Caco-2 (cell line): ENCODE measurements at regions of chr7 and their contacts with region 1.

Region 1: GRCh38 chr7:106285051-106285854 is 470 bp upstream of the NAMPT start:
- DNase-seq: peak; percentile 99
- H3K4me3 ChIP-seq: peak overlapping the region; percentile 67
- H3K4me3 Mint-ChIP-seq: peak overlapping the region; percentile 93
- H3K27ac Mint-ChIP-seq: peak overlapping the region; percentile 93
- H3K4me1 ChIP-seq: peaks cover 7% of the 10 kb centered on the region; the same call in 1 of the 2 replicates
- H3K4me1 Mint-ChIP-seq: peaks cover 13% of the 10 kb centered on the region
- H3K27me3 ChIP-seq: no peaks in the 10 kb centered on the region
- H3K27me3 Mint-ChIP-seq: no peaks in the 10 kb centered on the region
- CTCF ChIP-seq: no peak

Region 2: GRCh38 chr7:106031300-106032035 is 253.8 kb before region 1 on chr7:
- CTCF ChIA-PET with region 1: no interaction called
- POLR2A ChIA-PET with region 1: no interaction called
- intact Hi-C with region 1: no loop called
- DNase-seq: no peak
- H3K4me3 ChIP-seq: no peak overlapping the region
- H3K4me3 Mint-ChIP-seq: no peak overlapping the region
- H3K27ac Mint-ChIP-seq: no peak overlapping the region
- H3K4me1 ChIP-seq: no peaks in the 10 kb centered on the region
- H3K4me1 Mint-ChIP-seq: no peaks in the 10 kb centered on the region
- H3K27me3 ChIP-seq: no peaks in the 10 kb centered on the region
- H3K27me3 Mint-ChIP-seq: peaks cover 4% of the 10 kb centered on the region
- CTCF ChIP-seq: no peak

Region 3: GRCh38 chr7:106112117-106112971 is 172.9 kb before region 1 on chr7 and contains the start of gene SYPL1:
- CTCF ChIA-PET with region 1: no interaction called
- POLR2A ChIA-PET with region 1: interaction called, 16 read pairs
- intact Hi-C with region 1: loop called (anchors 5 kb)
- DNase-seq: peak; percentile 96
- H3K4me3 ChIP-seq: peak within 1 kb of the TSS; percentile 59
- H3K4me3 Mint-ChIP-seq: peak within 1 kb of the TSS; percentile 90
- H3K27ac Mint-ChIP-seq: peak within 1 kb of the TSS; percentile 88
- H3K4me1 ChIP-seq: peaks cover 25% of the 10 kb centered on the region
- H3K4me1 Mint-ChIP-seq: peaks cover 18% of the 10 kb centered on the region
- H3K27me3 ChIP-seq: no peaks in the 10 kb centered on the region
- H3K27me3 Mint-ChIP-seq: no peaks in the 10 kb centered on the region
- CTCF ChIP-seq: peak in 1 of 2 experiments; percentile 19
- total RNA-seq, gene SYPL1: 78.7 and 81.0 TPM in 2 replicates

Region 4: GRCh38 chr7:106239404-106239803 is 45.8 kb before region 1 on chr7:
- CTCF ChIA-PET with region 1: no interaction called
- POLR2A ChIA-PET with region 1: no interaction called
- intact Hi-C with region 1: no loop called
- DNase-seq: no peak
- H3K4me3 ChIP-seq: no peak overlapping the region
- H3K4me3 Mint-ChIP-seq: no peak overlapping the region
- H3K27ac Mint-ChIP-seq: no peak overlapping the region
- H3K4me1 ChIP-seq: no peaks in the 10 kb centered on the region
- H3K4me1 Mint-ChIP-seq: peaks cover 8% of the 10 kb centered on the region
- H3K27me3 ChIP-seq: no peaks in the 10 kb centered on the region
- H3K27me3 Mint-ChIP-seq: no peaks in the 10 kb centered on the region
- CTCF ChIP-seq: no peak

Region 5: GRCh38 chr7:106367018-106367420 is 81.8 kb after region 1 on chr7:
- CTCF ChIA-PET with region 1: no interaction called
- POLR2A ChIA-PET with region 1: interaction called, 3 read pairs
- intact Hi-C with region 1: loop called (anchors 5 kb)
- DNase-seq: no peak
- H3K4me3 ChIP-seq: no peak overlapping the region
- H3K4me3 Mint-ChIP-seq: no peak overlapping the region
- H3K27ac Mint-ChIP-seq: no peak overlapping the region
- H3K4me1 ChIP-seq: peaks cover 9% of the 10 kb centered on the region
- H3K4me1 Mint-ChIP-seq: no peaks in the 10 kb centered on the region
- H3K27me3 ChIP-seq: no peaks in the 10 kb centered on the region
- H3K27me3 Mint-ChIP-seq: no peaks in the 10 kb centered on the region
- CTCF ChIP-seq: no peak

Region 6: DNA sequence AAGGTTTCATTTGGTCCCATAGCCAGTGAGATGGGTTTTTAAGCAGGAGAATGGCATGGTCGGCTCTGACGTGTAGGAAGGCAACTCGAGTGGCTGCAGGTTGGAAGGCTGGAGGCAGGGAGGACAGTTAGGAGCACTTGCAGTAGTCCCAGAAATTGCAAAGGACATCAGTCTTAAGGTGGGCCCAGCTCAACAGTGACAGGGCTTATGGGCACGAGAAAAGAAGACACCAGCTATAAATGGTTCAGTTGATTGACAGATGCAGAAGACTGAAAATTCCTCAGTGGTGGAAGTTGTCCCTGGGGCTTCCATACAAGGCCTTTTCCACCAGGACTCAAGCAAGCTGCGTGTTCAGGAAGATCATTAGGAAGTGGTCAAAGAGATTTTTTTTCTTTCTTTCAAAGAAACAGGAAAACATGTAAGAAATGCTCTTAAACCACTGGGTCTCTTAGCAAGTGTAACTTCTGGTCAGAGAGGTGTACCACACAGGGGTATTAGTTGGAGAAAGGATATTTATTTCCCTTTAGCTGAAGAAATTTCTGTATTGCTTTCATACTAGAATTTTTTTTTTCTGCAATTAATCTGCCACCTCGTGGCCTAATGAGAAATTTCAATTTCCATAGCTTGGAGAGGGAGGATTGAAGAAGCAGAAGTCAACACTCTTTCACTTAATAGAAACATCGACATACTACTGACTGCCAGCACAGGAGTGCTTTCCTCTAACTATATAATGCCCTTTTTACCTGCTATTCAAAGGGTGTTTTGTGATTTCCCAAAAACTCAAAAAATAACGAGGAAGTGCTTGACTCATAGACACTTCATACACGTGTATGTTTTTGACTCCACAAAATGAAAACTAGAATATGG is 177.0 kb after region 1 on chr7:
- CTCF ChIA-PET with region 1: interaction called, 24 read pairs
- POLR2A ChIA-PET with region 1: interaction called, 21 read pairs
- intact Hi-C with region 1: loop called (anchors 1 kb)
- DNase-seq: peak in 1 of 2 experiments; percentile 41
- H3K4me3 ChIP-seq: no peak overlapping the region
- H3K4me3 Mint-ChIP-seq: peak overlapping the region; percentile 25
- H3K27ac Mint-ChIP-seq: peak overlapping the region; percentile 89
- H3K4me1 ChIP-seq: peaks cover 39% of the 10 kb centered on the region
- H3K4me1 Mint-ChIP-seq: peaks cover 38% of the 10 kb centered on the region
- H3K27me3 ChIP-seq: no peaks in the 10 kb centered on the region
- H3K27me3 Mint-ChIP-seq: no peaks in the 10 kb centered on the region
- CTCF ChIP-seq: peak; percentile 39 to 54

Region 7: GRCh38 chr7:106659963-106660861 is 375.0 kb after region 1 on chr7:
- CTCF ChIA-PET with region 1: no interaction called
- POLR2A ChIA-PET with region 1: no interaction called
- intact Hi-C with region 1: loop called (anchors 1 kb)
- DNase-seq: peak; percentile 68 to 83
- H3K4me3 ChIP-seq: peak overlapping the region; percentile 90
- H3K4me3 Mint-ChIP-seq: peak overlapping the region; percentile 73
- H3K27ac Mint-ChIP-seq: peak overlapping the region; percentile 16
- H3K4me1 ChIP-seq: peaks cover 14% of the 10 kb centered on the region
- H3K4me1 Mint-ChIP-seq: no peaks in the 10 kb centered on the region
- H3K27me3 ChIP-seq: no peaks in the 10 kb centered on the region
- H3K27me3 Mint-ChIP-seq: peaks cover 3% of the 10 kb centered on the region
- CTCF ChIP-seq: peak; percentile 55 to 60

Region 8: GRCh38 chr7:107168233-107169119 is 883.2 kb after region 1 on chr7 and contains the start of gene HBP1:
- CTCF ChIA-PET with region 1: no interaction called
- POLR2A ChIA-PET with region 1: no interaction called
- intact Hi-C with region 1: loop called (anchors 10 kb)
- DNase-seq: peak; percentile 98 to 99
- H3K4me3 ChIP-seq: peak within 1 kb of the TSS; percentile 92
- H3K4me3 Mint-ChIP-seq: peak within 1 kb of the TSS; percentile 85
- H3K27ac Mint-ChIP-seq: peak within 1 kb of the TSS; percentile 93
- H3K4me1 ChIP-seq: no peaks in the 10 kb centered on the region
- H3K4me1 Mint-ChIP-seq: peaks cover 6% of the 10 kb centered on the region
- H3K27me3 ChIP-seq: no peaks in the 10 kb centered on the region
- H3K27me3 Mint-ChIP-seq: no peaks in the 10 kb centered on the region
- CTCF ChIP-seq: no peak
- total RNA-seq, gene HBP1: 24.2 and 25.5 TPM in 2 replicates

Region 9: GRCh38 chr7:108057951-108058421 is 1772.7 kb after region 1 on chr7:
- CTCF ChIA-PET with region 1: no interaction called
- POLR2A ChIA-PET with region 1: no interaction called
- intact Hi-C with region 1: no loop called
- DNase-seq: no peak
- H3K4me3 ChIP-seq: no peak overlapping the region
- H3K4me3 Mint-ChIP-seq: no peak overlapping the region
- H3K27ac Mint-ChIP-seq: no peak overlapping the region
- H3K4me1 ChIP-seq: peaks cover 22% of the 10 kb centered on the region
- H3K4me1 Mint-ChIP-seq: peaks cover 28% of the 10 kb centered on the region
- H3K27me3 ChIP-seq: no peaks in the 10 kb centered on the region
- H3K27me3 Mint-ChIP-seq: no peaks in the 10 kb centered on the region
- CTCF ChIP-seq: no peak